ENCODE measurements at regions of chr1 and their contacts with region 1.

Region 1: DNA sequence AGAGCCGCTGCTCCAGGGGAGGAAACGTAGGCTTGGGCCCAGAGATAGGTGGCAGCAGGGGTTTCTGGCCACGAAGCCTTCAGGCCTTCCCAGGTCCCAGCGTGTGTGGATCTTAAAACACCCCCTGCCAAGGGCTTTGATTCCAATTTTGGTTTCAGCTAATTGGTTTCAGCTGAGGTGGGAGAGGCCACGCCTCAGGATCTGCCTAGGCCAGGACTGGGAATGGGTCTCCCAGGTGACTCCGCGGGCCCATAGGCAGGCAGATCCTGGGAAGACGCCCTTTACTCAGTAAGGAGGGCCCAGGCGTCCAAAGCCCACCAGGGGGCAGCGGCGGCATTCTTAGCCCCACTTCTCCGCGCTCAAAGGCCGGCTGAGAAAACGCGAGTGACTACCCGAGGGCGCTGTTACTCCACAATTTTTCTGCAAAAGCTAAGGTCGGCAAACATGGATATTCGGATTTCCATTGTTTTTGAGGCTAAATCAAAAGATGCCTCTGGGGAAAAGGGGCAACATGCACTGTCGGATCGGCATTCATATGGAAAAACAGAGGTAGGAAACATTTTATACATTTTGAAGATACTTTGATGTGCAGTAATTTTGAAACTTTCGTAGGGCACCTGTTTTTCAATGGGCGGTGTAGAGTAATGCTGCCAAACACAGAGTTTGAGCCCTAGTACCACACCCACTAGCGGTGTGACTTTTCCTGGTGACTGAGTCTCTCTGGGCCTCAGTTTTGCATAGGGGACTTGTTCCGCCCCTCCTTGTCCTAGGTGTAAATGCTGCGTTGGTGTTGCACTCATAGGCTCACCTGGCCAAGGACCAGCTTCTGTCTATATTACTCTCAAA is 31.8 kb upstream of the BCL10 start:
- DNase-seq: peak; percentile 87
- H3K4me3 ChIP-seq: no peak overlapping the region
- H3K27ac ChIP-seq: no peak overlapping the region
- H3K4me1 ChIP-seq: no peaks in the 10 kb centered on the region
- H3K27me3 ChIP-seq: no peaks in the 10 kb centered on the region
- CTCF ChIP-seq: peak; percentile 86 to 97 (median 96)
- POLR2A ChIP-seq: no peak

Region 2: DNA sequence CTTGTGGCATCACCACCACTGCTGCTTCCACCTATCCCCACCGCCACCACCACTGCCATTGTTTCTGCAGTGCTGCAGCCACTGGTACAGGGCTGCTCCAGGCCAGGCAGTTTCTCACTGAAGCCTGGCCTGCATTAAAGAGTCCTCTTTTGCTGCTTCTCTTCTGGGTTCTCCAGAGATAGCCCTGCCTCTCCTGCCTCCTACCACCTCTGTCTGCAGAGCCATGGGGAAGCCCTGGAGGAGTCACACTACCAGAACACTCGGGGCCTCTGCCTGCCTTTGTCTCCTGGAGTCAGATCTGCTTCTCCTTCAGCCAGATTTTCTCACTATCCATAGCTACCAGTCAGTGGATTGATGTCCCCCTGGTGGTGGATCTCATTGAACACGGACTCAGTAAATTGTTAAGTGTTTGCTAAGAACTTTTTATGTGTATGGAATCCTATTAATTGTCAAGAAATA is 194.4 kb after region 1 on chr1:
- intact Hi-C with region 1: loop called (anchors 5 kb)
- DNase-seq: peak; percentile 52
- H3K4me3 ChIP-seq: no peak overlapping the region
- H3K27ac ChIP-seq: no peak overlapping the region
- H3K4me1 ChIP-seq: no peaks in the 10 kb centered on the region
- H3K27me3 ChIP-seq: no peaks in the 10 kb centered on the region
- CTCF ChIP-seq: peak; percentile 28 to 72 (median 58)
- POLR2A ChIP-seq: no peak

Region 3: GRCh38 chr1:85581802-85582686 is 273.8 kb after region 1 on chr1:
- intact Hi-C with region 1: loop called (anchors 2 kb)
- DNase-seq: peak; percentile 80
- H3K4me3 ChIP-seq: peak overlapping the region; percentile 85 to 88
- H3K27ac ChIP-seq: peak overlapping the region; percentile 96 to 98
- H3K4me1 ChIP-seq: no peaks in the 10 kb centered on the region
- H3K27me3 ChIP-seq: no peaks in the 10 kb centered on the region
- CTCF ChIP-seq: peak in 3 of 4 experiments; percentile 32 to 78 (median 64)
- POLR2A ChIP-seq: no peak

Region 4: DNA sequence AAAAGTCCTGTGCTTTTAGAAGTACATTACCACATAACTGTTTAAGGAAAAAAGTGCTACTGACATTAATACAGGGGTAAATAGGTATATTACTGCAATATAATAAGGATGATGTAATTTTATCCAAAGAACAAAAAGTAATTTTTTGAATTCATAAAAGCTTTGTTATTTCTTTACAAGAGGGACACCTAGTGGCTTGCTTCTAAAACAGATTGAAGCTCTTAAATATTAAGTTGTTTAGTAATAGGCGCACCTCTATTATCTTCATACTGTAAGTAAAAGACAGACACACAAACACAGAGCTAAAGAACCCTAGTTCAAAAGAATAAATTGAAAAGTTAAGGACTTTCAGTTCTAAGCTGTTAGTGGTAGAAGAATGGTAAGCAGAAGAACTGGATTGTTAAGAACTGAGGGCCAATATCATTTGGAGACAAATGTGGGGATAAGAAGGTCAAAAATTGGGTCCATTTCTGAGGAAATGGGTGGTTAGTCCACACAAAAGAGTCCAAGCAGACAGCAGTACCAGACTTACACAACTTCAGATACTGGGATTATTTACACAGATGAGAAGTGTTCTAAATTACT is 384.6 kb after region 1 on chr1:
- intact Hi-C with region 1: loop called (anchors 1 kb)
- DNase-seq: no peak
- H3K4me3 ChIP-seq: no peak overlapping the region
- H3K27ac ChIP-seq: no peak overlapping the region
- H3K4me1 ChIP-seq: no peaks in the 10 kb centered on the region
- H3K27me3 ChIP-seq: no peaks in the 10 kb centered on the region
- CTCF ChIP-seq: peak in 3 of 4 experiments; percentile 34 to 63 (median 52)
- POLR2A ChIP-seq: no peak

Region 5: DNA sequence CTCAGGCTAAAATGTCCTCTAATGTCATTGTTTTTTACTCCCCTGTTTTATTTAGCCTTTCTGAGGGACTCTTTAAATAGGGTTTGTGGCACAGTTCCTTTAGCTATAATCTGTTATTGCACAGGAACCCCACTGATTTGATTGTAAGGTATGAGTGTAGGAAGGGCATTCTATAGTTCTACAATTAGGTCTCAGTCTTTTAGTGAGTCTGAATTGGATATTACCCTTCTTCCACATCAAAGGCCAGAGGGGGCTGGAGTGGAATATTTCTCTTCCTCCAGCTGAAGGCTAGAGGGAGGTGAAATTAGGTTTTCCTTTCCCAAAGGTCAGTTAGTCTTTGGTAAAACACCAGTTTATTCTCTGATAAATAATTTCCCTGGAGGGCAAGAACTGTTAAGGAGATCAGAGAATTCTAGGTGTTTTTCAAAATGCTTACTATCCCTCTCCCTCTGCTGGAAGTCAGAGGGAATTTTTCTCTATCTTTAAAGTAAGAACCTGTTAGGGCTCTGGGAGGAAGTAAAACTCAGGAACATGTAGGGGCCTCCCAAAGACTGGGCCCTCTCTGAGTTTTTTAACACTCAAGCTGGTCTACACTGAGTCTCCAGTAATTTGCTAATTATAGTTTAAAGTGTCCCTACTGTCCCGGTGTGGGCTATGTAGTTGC is 576.3 kb after region 1 on chr1:
- intact Hi-C with region 1: loop called (anchors 10 kb)
- DNase-seq: no peak
- H3K4me3 ChIP-seq: no peak overlapping the region
- H3K27ac ChIP-seq: no peak overlapping the region
- H3K4me1 ChIP-seq: no peaks in the 10 kb centered on the region
- H3K27me3 ChIP-seq: no peaks in the 10 kb centered on the region
- CTCF ChIP-seq: peak in 3 of 4 experiments; percentile 12 to 36 (median 29)
- POLR2A ChIP-seq: no peak